Naive thymus-derived CD8-positive, alpha-beta T cell (primary cell): ENCODE measurements at regions of chr17 and their contacts with region 1.

Region 1: GRCh38 chr17:1474402-1475189 is 17.9 kb downstream of the MYO1C start:
- DNase-seq: no peak
- ATAC-seq: no peak
- H3K4me3 Mint-ChIP-seq: no peak overlapping the region
- H3K27ac Mint-ChIP-seq: no peak overlapping the region
- H3K4me1 Mint-ChIP-seq: peaks cover 13 to 24% (median 16%) of the 10 kb centered on the region in 4 donors
- H3K27me3 Mint-ChIP-seq: no peaks in the 10 kb centered on the region

Region 2: DNA sequence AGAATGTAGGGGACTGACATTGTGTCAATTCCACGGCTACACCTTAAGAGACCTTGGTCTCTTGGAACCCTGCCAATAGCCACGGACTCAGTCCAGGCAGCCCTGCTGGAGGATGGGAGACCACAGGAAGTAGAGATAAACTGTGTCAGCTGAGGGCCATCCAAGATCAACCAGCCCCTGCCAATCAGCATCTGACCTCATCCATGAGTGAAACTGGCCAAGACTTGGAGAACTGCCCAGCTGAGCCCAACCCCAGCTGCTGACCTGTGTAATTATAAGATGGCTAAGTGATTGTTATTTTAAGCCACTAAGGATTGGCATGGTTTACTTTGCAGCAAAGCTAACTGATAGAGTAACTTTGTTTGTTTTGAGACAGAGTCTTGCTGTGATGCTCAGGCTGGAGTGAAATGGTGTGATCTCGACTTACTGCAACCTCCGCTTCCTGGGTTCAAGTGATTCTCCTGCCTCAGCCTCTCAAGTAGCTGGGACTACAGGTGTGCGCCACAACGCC is 61.3 kb before region 1 on chr17:
- POLR2A ChIA-PET with region 1: no interaction called
- DNase-seq: no peak
- ATAC-seq: no peak
- H3K4me3 Mint-ChIP-seq: no peak overlapping the region
- H3K27ac Mint-ChIP-seq: peak overlapping the region in 1 of 10 donors; percentile 38
- H3K4me1 Mint-ChIP-seq: peaks cover 0 to 3% (median 0%) of the 10 kb centered on the region in 4 donors
- H3K27me3 Mint-ChIP-seq: no peaks in the 10 kb centered on the region

Region 3: GRCh38 chr17:1462287-1463112 is 12.1 kb before region 1 on chr17:
- POLR2A ChIA-PET with region 1: interaction called, 10 read pairs
- DNase-seq: no peak
- ATAC-seq: no peak
- H3K4me3 Mint-ChIP-seq: peak overlapping the region; percentile 59 to 87 (median 72)
- H3K27ac Mint-ChIP-seq: peak overlapping the region; percentile 12 to 90 (median 78)
- H3K4me1 Mint-ChIP-seq: peaks cover 19 to 39% (median 37%) of the 10 kb centered on the region in 4 donors
- H3K27me3 Mint-ChIP-seq: peaks cover 2 to 8% (median 4%) of the 10 kb centered on the region in 5 donors